Esophagus muscularis mucosa (tissue), 4 donors: ENCODE measurements at regions of chr21 and their contacts with region 1.

Region 1: DNA sequence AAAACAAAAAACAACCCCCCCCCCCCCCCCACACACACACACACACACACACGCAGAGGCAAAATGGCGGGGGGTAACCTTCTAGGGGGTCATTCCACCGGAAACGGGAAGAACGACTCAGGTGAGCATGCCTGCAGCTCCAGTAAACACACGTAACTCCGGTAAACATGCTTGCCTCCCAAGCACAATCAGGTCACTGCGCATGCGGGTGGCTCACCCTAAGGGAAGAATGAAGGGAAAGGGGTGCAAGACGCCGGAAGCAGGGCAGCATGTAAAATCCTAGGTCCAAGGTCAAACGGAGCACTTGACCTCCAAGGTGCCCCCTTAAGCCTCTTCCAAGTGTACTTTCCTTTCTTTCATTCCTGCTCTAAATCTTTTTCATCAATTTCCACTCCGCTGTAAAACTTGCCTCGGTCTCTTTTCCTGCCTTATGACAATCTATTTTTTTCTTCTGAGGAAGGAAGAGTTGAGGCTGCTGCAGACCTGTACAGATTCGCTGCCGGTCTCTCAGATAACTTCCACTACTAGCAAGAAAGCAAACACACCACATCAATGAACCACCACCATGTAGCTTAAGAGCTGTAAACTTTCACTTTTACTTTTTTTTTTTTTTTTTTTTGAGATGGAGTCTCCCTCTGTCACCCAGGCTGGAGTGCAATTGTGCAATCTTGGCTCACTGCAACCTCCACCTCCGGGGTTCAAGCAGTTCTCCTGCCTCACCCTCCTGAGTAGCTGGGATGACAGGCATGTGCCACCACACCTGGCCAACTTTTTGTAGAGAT is 21.0 kb upstream of the CBR3 start:
- DNase-seq: no peak
- H3K4me3 ChIP-seq: no peak overlapping the region
- H3K27ac ChIP-seq: no peak overlapping the region
- H3K4me1 ChIP-seq: peaks cover 3 to 16% (median 12%) of the 10 kb centered on the region in 4 donors
- H3K27me3 ChIP-seq: no peaks in the 10 kb centered on the region
- CTCF ChIP-seq: no peak
- EP300 ChIP-seq: no peak
- POLR2A ChIP-seq: no peak

Region 2: DNA sequence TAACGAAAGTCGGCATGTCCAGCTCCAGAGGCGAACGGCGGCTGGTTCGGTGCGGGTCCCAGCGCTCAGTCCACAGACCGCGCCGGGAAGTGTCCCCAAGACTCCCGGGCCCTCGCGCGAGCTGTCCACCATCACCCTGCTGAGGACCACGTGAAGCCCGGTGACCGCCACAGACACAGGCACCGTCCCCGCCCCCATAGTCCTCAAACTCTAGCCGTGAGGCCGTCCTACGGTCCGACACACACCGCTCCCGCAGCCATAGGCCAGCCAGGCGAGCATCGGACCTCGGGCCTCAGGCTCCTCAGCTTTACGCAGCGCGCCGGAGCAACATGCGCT is 54.0 kb before region 1 on chr21:
- intact Hi-C with region 1: loop called (anchors 1 kb)
- DNase-seq: no peak
- H3K4me3 ChIP-seq: peak overlapping the region; percentile 58 to 80 (median 77)
- H3K27ac ChIP-seq: peak overlapping the region; percentile 88 to 91 (median 90)
- H3K4me1 ChIP-seq: peaks cover 19 to 33% (median 28%) of the 10 kb centered on the region in 4 donors
- H3K27me3 ChIP-seq: no peaks in the 10 kb centered on the region
- CTCF ChIP-seq: no peak
- EP300 ChIP-seq: no peak
- POLR2A ChIP-seq: no peak

Region 3: GRCh38 chr21:36069713-36070573 is 43.9 kb before region 1 on chr21 and contains the start of gene CBR1:
- intact Hi-C with region 1: loop called (anchors 5 kb)
- DNase-seq: peak; percentile 97
- H3K4me3 ChIP-seq: peak within 1 kb of the TSS; percentile 61 to 86 (median 78)
- H3K27ac ChIP-seq: peak within 1 kb of the TSS; percentile 79 to 87 (median 82)
- H3K4me1 ChIP-seq: peaks cover 16 to 47% (median 45%) of the 10 kb centered on the region in 4 donors
- H3K27me3 ChIP-seq: no peaks in the 10 kb centered on the region
- CTCF ChIP-seq: peak in 1 of 3 experiments; percentile 10
- EP300 ChIP-seq: no peak
- POLR2A ChIP-seq: no peak
- total RNA-seq, gene CBR1: 83.3 to 155 (median 121) TPM

Region 4: DNA sequence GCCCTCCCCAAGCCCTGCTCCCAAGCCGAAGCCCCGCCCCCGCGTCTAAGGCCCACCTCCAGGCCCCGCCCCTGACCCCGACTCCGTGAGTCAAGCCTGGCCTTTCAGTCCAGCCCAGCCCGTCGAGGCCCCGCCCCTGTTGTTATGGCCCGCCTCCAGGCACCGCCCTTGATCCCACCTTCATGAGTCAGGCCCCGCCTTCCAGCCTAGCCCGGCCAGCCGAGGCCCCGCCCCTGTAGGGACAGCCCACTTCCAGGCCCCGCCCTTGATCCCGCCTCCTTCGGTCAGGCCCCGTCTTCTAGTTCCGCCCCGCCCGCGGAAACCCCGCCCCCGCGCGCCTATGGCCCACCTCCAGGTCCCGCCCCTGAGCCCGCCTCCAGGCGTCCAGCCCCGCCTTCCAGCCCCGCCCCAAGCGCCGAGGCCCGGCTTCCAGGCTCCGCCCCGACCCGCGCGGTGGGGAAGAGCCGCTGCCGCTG is 42.5 kb after region 1 on chr21:
- intact Hi-C with region 1: no loop called
- DNase-seq: peak; percentile 100
- H3K4me3 ChIP-seq: peak overlapping the region; percentile 89 to 99 (median 98)
- H3K27ac ChIP-seq: peak overlapping the region; percentile 82 to 90 (median 86)
- H3K4me1 ChIP-seq: peaks cover 7 to 22% (median 20%) of the 10 kb centered on the region in 4 donors
- H3K27me3 ChIP-seq: no peaks in the 10 kb centered on the region
- CTCF ChIP-seq: no peak
- EP300 ChIP-seq: no peak
- POLR2A ChIP-seq: no peak